ENCODE measurements at regions of chr17 and their contacts with region 1.

Region 1: DNA sequence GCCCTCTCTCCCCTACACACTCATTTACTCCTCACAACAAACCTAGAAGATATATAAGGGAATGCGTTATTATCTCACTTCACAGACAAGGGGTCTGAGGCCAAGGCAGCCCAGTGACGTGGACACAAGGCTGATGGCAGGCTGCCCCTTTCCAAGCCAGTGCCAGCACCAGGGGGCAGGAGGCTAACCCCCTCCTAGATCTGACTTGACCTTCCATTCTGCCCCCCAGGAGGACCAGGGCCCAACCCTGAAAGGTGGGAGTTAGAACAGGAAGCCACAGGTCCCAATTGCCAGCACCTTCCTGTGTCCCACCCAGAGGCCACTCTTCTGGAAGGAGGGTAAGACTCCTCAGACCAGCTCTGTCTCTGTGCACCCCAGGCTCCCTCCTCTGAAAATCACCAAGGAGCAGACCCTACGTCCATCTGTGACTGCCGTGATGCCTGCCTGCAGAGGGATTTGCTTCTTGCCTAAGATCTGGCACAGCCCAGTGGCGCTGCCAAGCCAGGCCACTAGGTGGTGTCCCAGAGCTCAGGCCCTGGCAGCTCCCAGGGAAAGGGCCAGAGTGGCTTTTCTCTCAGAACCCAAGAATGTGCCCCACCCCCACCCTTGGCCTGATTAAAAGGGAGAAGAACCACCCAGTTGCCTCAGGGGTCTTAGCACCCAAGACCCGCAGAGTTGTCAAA is 42.4 kb upstream of the MRPS23 start:
- DNase-seq: no peak
- H3K4me3 ChIP-seq: no peak overlapping the region
- H3K27ac ChIP-seq: peak overlapping the region; percentile 45
- H3K4me1 ChIP-seq: peaks cover 35% of the 10 kb centered on the region
- H3K27me3 ChIP-seq: no peaks in the 10 kb centered on the region
- CTCF ChIP-seq: peak; percentile 96 to 99

Region 2: GRCh38 chr17:57849874-57850754 is 42.2 kb before region 1 on chr17 and contains the start of gene MRPS23:
- CTCF ChIA-PET with region 1: no interaction called
- dilution Hi-C with region 1: no loop called
- in situ Hi-C with region 1: no loop called
- intact Hi-C with region 1: loop called (anchors 2 kb)
- DNase-seq: peak; percentile 99
- H3K4me3 ChIP-seq: peak within 1 kb of the TSS; percentile 80 to 98 (median 86)
- H3K27ac ChIP-seq: peak within 1 kb of the TSS; percentile 73
- H3K4me1 ChIP-seq: peaks cover 15% of the 10 kb centered on the region
- H3K27me3 ChIP-seq: no peaks in the 10 kb centered on the region
- CTCF ChIP-seq: no peak
- total RNA-seq, gene MRPS23: 17.7 to 48.4 TPM

Region 3: GRCh38 chr17:57875309-57876115 is 16.8 kb before region 1 on chr17:
- CTCF ChIA-PET with region 1: interaction called, 15 read pairs
- dilution Hi-C with region 1: no loop called
- in situ Hi-C with region 1: no loop called
- intact Hi-C with region 1: loop called (anchors 1 kb)
- DNase-seq: peak; percentile 91
- H3K4me3 ChIP-seq: no peak overlapping the region
- H3K27ac ChIP-seq: peak overlapping the region; percentile 61
- H3K4me1 ChIP-seq: peaks cover 70% of the 10 kb centered on the region
- H3K27me3 ChIP-seq: no peaks in the 10 kb centered on the region
- CTCF ChIP-seq: peak; percentile 57 to 58

Region 4: DNA sequence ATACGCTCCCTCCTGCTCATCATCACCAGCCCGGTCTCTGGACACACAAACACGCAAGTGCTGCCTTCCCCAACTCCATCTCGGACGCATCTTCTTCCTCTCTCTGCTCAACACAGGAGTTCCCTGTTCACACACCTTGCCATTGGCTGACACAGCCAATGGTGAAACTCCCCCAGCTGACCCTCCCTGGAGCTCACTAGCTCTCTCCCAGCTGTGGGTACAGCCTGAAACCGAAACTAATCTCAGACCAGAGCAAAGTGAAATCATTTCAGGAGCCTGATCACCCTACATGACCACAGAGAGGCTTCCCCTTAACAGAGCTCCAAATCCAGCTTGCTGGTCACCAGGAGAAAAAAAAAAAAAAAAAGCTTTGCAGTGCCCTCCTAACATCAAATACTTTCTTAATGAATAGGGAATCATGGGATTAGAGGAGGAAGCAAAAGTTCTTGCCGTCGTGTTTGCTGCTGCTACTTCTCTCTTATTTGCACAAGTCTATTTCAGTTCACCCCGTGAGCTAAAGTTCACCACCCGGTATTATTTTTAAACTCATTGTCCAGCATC is 54.6 kb after region 1 on chr17:
- CTCF ChIA-PET with region 1: no interaction called
- dilution Hi-C with region 1: no loop called
- in situ Hi-C with region 1: no loop called
- intact Hi-C with region 1: loop called (anchors 1 kb)
- DNase-seq: peak; percentile 69
- H3K4me3 ChIP-seq: no peak overlapping the region
- H3K27ac ChIP-seq: no peak overlapping the region
- H3K4me1 ChIP-seq: peaks cover 39% of the 10 kb centered on the region
- H3K27me3 ChIP-seq: no peaks in the 10 kb centered on the region
- CTCF ChIP-seq: no peak

Region 5: GRCh38 chr17:57987580-57988421 is 95.5 kb after region 1 on chr17 and contains the start of gene VEZF1:
- CTCF ChIA-PET with region 1: interaction called, 5 read pairs
- dilution Hi-C with region 1: loop called (anchors 5 kb)
- in situ Hi-C with region 1: no loop called
- intact Hi-C with region 1: loop called (anchors 1 kb)
- DNase-seq: peak; percentile 68
- H3K4me3 ChIP-seq: peak within 1 kb of the TSS; percentile 75 to 88 (median 86)
- H3K27ac ChIP-seq: peak within 1 kb of the TSS; percentile 80
- H3K4me1 ChIP-seq: peaks cover 27% of the 10 kb centered on the region
- H3K27me3 ChIP-seq: no peaks in the 10 kb centered on the region
- CTCF ChIP-seq: no peak
- total RNA-seq, gene VEZF1: 20.5 to 34.7 TPM

Region 6: DNA sequence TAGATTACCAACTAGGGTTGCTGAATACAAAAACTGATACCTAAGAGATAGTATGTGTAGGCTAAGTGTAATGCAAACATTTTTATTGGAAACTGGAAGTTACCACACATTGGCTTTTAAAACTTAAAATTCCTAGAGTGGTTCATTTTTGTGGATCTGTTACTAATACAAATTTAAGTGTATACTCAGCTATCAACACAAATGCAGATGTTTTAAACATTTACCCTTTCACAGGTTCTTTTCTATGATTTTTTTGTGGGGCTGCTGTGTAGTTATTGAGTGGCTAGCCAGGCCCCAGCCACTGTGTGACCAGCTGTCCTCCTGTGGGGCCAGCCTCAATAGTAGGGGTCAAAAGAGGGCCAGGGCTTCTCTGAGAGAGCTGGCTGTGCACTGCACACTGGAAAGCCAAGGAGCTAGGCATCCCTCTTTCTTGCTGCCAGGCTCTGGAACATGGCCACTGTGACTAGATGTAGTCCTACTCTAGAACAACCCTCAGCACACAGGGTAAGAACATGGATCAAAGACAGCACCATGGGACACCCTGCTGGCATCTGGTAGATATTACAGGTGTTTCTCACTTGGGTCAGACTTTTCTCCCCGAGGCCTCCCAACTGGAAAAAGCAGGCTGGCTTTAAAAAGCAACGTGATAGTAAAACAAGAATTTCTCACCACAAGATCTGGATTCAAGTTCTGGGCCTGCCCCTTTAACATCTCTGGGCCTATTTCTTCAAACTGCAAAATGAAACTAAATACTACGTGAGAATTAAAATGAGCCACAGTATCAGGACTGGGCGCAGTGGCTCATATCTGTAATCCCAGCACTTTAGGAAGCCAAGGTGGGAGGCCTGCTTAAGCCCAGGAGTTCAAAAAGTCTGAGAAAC is 103.0 kb after region 1 on chr17:
- CTCF ChIA-PET with region 1: no interaction called
- dilution Hi-C with region 1: loop called (anchors 5 kb)
- in situ Hi-C with region 1: no loop called
- intact Hi-C with region 1: loop called (anchors 1 kb)
- DNase-seq: peak; percentile 61
- H3K4me3 ChIP-seq: no peak overlapping the region
- H3K27ac ChIP-seq: no peak overlapping the region
- H3K4me1 ChIP-seq: no peaks in the 10 kb centered on the region
- H3K27me3 ChIP-seq: no peaks in the 10 kb centered on the region
- CTCF ChIP-seq: peak; percentile 69 to 81